HEK293 (cell line): ENCODE measurements at regions of chr6 and their contacts with region 1.

Region 1: GRCh38 chr6:123715006-123715875 is 78.5 kb upstream of the TRDN start:
- H3K4me3 ChIP-seq: no peak overlapping the region
- H3K27ac ChIP-seq: no peak overlapping the region
- H3K4me1 ChIP-seq: no peaks in the 10 kb centered on the region
- CTCF ChIP-seq: no peak

Region 2: GRCh38 chr6:123393328-123393727 is 321.9 kb before region 1 on chr6:
- CTCF ChIA-PET with region 1: interaction called, 34 read pairs
- POLR2A ChIA-PET with region 1: no interaction called
- H3K4me3 ChIP-seq: no peak overlapping the region
- H3K27ac ChIP-seq: no peak overlapping the region
- H3K4me1 ChIP-seq: no peaks in the 10 kb centered on the region
- CTCF ChIP-seq: peak; percentile 53; the same call in 1 of the 2 replicates

Region 3: DNA sequence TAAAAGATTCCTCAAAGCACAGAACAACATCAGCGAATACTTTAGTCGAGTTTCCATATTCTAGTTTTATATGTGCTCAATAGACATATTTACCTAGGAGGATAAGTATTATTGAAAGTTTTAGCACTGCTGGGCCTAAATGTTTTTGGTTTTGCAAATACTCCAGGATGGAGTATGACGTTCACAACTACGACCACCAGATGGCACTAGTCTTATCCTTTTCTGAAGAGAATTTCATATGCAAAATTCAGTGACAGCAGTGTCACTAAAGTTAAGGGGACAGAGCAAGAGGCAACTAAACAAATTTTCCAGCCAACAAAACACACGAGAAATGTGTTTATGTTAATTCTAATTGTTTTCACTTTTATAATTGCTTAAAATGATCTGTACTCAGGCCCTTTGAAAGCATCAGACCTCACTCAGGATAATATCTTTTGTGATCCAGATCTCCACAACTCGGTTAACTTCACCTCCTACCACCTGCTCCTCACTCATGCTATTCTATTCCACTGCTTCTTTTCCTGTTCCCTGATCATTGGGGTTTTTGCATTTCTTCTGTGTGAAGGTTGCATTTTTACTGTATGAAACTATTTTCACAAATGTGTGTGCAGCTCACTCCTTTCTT is 299.3 kb before region 1 on chr6:
- CTCF ChIA-PET with region 1: interaction called, 51 read pairs
- POLR2A ChIA-PET with region 1: no interaction called
- H3K4me3 ChIP-seq: no peak overlapping the region
- H3K27ac ChIP-seq: no peak overlapping the region
- H3K4me1 ChIP-seq: no peaks in the 10 kb centered on the region
- CTCF ChIP-seq: 0 out of 2 replicates have a peak, but pooled peaks have one; percentile 14

Region 4: GRCh38 chr6:123681957-123682462 is 33.2 kb before region 1 on chr6:
- CTCF ChIA-PET with region 1: interaction called, 10 read pairs
- POLR2A ChIA-PET with region 1: no interaction called
- H3K4me3 ChIP-seq: no peak overlapping the region
- H3K27ac ChIP-seq: no peak overlapping the region
- H3K4me1 ChIP-seq: no peaks in the 10 kb centered on the region
- CTCF ChIP-seq: no peak

Region 5: GRCh38 chr6:124090491-124090890 is 375.2 kb after region 1 on chr6:
- CTCF ChIA-PET with region 1: no interaction called
- POLR2A ChIA-PET with region 1: no interaction called
- H3K4me3 ChIP-seq: no peak overlapping the region
- H3K27ac ChIP-seq: no peak overlapping the region
- H3K4me1 ChIP-seq: peaks cover 19% of the 10 kb centered on the region
- CTCF ChIP-seq: no peak

Region 6: GRCh38 chr6:124203101-124203811 is 488.0 kb after region 1 on chr6:
- CTCF ChIA-PET with region 1: no interaction called
- POLR2A ChIA-PET with region 1: no interaction called
- H3K4me3 ChIP-seq: no peak overlapping the region
- H3K27ac ChIP-seq: no peak overlapping the region
- H3K4me1 ChIP-seq: no peaks in the 10 kb centered on the region
- CTCF ChIP-seq: no peak